ENCODE measurements at regions of chr15 and their contacts with region 1.

Region 1: DNA sequence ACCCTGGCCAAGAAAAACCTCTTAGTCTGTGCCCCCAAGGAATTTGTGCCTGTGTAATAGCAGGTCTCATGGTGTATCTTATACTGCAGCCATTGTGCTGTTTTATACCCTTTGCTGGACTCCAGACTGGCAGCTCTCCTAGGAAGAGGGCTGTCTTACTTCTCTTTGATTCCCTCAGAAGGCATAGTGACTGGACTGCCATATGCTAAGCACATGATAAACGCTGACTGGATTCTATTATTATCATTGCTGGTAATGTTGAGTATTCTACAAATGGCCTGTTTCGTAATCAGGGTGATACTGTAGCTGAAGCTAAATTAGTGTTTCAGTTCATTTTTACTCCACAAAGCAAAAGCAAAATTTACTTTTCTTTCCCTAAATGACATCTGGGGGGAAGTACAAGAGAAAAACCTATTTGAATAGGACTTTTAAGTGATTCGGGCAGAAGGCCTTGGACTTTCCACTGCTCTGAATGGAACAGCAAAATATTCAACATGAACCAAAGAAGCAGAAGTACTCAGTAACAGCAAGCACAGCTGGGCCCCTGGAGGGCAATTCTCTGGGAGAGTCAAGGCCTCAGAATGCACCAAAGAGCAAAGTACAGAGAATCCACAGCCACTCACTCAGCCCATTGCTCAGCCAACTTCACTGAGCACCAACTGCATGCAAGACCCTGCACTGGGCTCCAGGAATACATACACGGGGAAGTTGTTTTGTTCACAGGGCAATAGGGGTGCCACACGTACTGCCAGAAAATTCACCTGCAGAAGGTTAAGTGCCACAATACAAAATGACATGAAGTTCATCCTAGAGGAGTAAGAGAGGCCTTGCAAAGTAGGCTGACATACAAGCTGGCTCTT is 7.9 kb upstream of the BCL2A1 start:
- DNase-seq: no peak
- H3K4me3 ChIP-seq: no peak overlapping the region
- H3K27ac ChIP-seq: no peak overlapping the region
- H3K4me1 ChIP-seq: no peaks in the 10 kb centered on the region; a peak in 1 of 7 replicates
- H3K27me3 ChIP-seq: no peaks in the 10 kb centered on the region
- CTCF ChIP-seq: no peak
- EP300 ChIP-seq: no peak
- POLR2A ChIP-seq: no peak
- RAD21 ChIP-seq: no peak

Region 2: DNA sequence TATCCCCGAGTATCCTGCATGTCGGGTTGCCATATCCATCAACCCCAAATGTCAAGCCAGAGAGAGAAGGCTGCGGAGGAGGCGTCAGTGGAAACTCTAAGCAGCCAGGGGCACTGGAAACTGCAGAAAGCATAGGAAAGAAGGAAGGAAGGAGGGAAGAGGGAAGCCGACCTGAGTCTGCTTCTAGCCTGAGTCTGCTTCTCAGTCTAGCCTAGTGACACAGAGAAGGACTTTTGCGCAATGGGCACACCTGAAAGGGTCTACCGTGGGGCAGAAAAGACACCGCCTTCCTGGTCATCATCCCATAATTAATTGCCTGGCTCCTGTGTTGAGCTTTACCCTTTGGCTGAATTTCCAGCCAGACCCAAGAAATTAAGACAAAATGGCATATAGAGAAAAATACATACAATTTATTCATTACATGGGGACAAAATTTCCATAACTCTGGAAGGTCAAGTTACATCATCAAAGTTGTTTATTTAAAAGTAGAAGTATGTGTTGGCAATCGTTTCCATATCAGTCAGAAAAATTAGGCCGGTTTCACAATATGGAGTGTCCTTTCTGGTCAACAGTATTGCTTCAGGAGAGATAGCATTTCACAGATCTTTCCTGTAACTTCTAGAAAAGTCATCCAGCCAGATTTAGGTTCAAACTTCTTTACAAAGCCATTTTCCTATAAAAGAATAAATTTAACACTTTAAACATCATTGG is 18.2 kb before region 1 on chr15:
- CTCF ChIA-PET with region 1: no interaction called
- POLR2A ChIA-PET with region 1: no interaction called
- DNase-seq: no peak
- H3K4me3 ChIP-seq: no peak overlapping the region
- H3K27ac ChIP-seq: no peak overlapping the region
- H3K4me1 ChIP-seq: no peaks in the 10 kb centered on the region
- H3K27me3 ChIP-seq: no peaks in the 10 kb centered on the region
- CTCF ChIP-seq: no peak
- EP300 ChIP-seq: no peak
- POLR2A ChIP-seq: no peak
- RAD21 ChIP-seq: no peak

Region 3: GRCh38 chr15:79990997-79991334 is 12.1 kb after region 1 on chr15:
- CTCF ChIA-PET with region 1: interaction called, 14 read pairs
- POLR2A ChIA-PET with region 1: no interaction called
- DNase-seq: no peak
- H3K4me3 ChIP-seq: no peak overlapping the region
- H3K27ac ChIP-seq: no peak overlapping the region
- H3K4me1 ChIP-seq: no peaks in the 10 kb centered on the region
- H3K27me3 ChIP-seq: no peaks in the 10 kb centered on the region
- CTCF ChIP-seq: no peak
- EP300 ChIP-seq: no peak
- POLR2A ChIP-seq: no peak
- RAD21 ChIP-seq: no peak

Region 4: DNA sequence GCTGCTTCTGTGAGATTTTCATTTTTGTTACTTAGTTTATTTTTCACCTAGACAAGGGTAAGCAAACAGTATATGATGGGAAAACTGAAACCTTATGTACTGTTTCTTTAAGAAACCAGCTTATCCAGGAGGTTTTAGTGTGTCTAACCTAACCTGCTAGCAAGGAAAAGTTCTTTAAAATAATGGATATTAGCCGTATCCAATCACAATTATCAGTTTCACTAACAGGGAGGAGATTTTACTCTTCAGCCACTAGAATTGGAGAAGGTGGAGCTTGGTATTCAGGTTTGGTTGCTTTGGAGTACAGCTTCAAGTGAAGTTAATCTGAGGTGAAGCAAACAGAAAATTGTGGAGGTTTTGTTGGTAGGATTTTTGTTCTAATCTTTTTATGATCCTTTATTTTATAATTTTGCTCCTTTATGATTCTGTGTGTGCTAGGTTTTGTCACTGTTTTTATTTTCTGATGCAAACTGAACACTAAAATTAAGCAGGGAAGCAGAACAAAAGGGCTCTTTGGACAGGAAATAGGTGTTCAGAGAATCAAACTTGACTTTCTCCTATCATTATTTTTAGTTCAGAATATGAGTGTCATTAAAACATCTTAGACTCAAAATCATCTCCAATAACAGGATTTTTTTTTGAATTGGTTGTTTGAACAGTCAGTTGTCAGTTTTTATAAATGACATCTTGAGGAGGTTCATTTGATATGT is 93.6 kb after region 1 on chr15:
- CTCF ChIA-PET with region 1: no interaction called
- POLR2A ChIA-PET with region 1: no interaction called
- DNase-seq: no peak
- H3K4me3 ChIP-seq: peak overlapping the region; percentile 16 to 61 (median 32); a peak in 6 of 8 replicates
- H3K27ac ChIP-seq: no peak overlapping the region
- H3K4me1 ChIP-seq: peaks cover 0 to 15% (median 3%) of the 10 kb centered on the region in 4 experiments; a peak in 6 of 7 replicates
- H3K27me3 ChIP-seq: no peaks in the 10 kb centered on the region
- CTCF ChIP-seq: no peak
- EP300 ChIP-seq: no peak
- POLR2A ChIP-seq: no peak
- RAD21 ChIP-seq: no peak

Measured in H1 (cell line).